ENCODE measurements at regions of chr13 and their contacts with region 1.

Region 1: GRCh38 chr13:26186118-26186870 is 35.8 kb downstream of the RNF6 start:
- DNase-seq: peak; percentile 49
- H3K4me3 ChIP-seq: peak overlapping the region; percentile 66
- CTCF ChIP-seq: peak; percentile 49

Region 2: DNA sequence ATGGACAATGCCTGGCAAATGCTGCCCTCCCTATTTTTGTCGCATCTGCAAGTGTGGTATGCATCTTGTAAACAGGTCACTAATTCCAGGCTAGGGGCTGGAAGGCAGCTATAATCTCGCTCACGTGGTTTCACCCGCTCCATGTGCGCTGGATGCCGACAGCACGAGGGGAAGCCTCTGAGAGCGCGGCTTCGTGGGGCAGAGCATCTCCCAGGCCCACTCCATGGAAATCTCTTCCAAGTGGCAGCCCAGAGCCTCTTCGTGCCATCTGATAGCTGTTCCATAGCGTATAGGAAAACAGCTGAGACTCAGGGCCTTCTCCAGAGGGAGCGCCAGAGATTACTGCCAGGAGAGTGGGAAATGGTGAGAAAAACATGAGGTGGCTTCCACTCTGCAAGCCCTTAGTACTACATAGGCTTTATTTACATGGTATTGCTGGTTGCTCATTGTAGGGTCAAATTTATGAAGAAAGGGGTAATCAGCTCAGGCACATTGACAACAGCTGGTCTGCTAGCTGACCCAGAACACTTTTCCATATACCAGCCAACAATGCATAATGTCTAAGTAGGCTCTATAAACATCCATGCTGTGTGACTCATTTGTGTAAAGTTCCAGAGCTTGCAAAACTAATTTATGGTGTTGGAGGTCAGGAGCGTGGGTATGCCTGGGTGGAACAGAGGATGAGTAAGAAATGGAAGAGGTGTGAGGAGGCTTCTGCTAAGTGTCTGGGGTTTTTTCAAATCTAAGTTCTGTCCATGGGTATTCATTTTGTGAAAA is 299.7 kb before region 1 on chr13:
- CTCF ChIA-PET with region 1: no interaction called
- POLR2A ChIA-PET with region 1: no interaction called
- DNase-seq: peak; percentile 71
- H3K4me3 ChIP-seq: no peak overlapping the region
- CTCF ChIP-seq: no peak

Region 3: DNA sequence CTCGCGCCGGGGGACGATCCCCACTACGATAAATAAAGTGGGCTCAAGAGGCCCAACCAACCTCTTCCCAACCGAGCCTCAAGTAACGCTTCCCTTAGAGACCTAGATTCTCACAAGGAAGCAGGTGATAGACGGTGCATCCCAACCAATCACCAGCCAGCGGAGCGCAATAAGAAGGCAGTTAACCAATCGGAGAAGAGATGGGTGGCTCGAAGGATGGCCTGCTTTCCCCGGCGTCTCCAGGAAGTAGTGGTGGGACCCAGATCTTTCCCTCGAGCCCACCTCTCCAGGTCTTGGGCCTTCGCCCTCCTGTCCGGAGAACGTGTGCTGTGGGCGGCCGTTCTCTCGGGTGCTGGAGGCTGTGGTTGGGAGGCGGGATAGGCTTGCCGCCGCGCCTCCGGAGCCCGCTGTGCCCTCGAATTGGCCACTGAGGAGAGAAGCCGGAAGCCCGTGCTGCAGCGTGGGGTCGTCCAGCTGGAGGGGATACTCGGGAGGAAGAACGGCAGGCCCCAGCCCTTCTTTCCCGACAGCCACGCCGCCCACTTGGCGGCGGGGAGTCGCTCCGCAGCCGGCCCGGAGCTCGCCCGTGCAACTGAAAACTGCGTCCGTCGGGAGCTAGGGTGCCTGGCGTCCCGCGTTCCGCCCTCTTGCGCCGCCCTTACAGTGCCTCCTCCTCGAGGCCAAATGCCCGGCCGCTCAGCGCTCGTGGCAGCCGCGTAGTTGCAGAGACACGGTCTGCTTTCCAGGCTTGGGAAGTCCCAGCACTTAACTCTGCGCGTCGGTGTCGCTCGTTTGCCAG is 35.6 kb after region 1 on chr13 and contains the start of gene RNF6:
- CTCF ChIA-PET with region 1: interaction called, 10 read pairs
- POLR2A ChIA-PET with region 1: interaction called, 6 read pairs
- DNase-seq: peak; percentile 96
- H3K4me3 ChIP-seq: peak within 1 kb of the TSS; percentile 90
- CTCF ChIP-seq: no peak

Region 4: GRCh38 chr13:26488236-26489003 is 302.1 kb after region 1 on chr13:
- CTCF ChIA-PET with region 1: interaction called, 205 read pairs
- POLR2A ChIA-PET with region 1: interaction called, 3 read pairs
- DNase-seq: no peak
- H3K4me3 ChIP-seq: no peak overlapping the region
- CTCF ChIP-seq: no peak

Region 5: DNA sequence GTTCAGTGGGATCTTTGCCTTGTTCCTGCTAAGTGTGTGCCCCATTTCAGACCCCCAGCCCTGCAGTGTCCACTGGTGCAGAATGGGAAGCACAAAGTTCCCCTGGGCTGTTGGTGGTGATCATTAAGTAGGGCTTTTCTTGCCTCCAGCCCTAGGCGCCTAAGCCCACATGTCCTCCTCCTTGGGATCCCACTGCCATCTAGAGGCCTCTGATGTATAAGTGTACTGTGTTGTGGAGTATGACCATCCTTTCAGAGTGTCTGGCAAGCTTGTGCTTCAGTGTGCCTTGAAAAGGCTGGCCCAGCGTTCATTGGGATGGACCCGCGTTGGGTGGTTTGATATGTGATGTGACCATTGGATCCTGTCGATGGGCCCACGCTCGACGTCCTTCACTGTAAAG is 442.4 kb after region 1 on chr13:
- CTCF ChIA-PET with region 1: interaction called, 15 read pairs
- POLR2A ChIA-PET with region 1: no interaction called
- DNase-seq: no peak
- H3K4me3 ChIP-seq: no peak overlapping the region
- CTCF ChIP-seq: peak; percentile 21

Region 6: GRCh38 chr13:26721251-26722121 is 535.2 kb after region 1 on chr13:
- CTCF ChIA-PET with region 1: interaction called, 11 read pairs
- POLR2A ChIA-PET with region 1: no interaction called
- DNase-seq: no peak
- H3K4me3 ChIP-seq: no peak overlapping the region
- CTCF ChIP-seq: no peak

Measured in AG04449 (cell line).